ENCODE measurements at regions of chr15 and their contacts with region 1.

Region 1: GRCh38 chr15:55649054-55649423 is 60.9 kb upstream of the PYGO1 start:
- DNase-seq: no peak
- H3K4me3 Mint-ChIP-seq: no peak overlapping the region
- H3K27ac Mint-ChIP-seq: no peak overlapping the region
- H3K4me1 Mint-ChIP-seq: no peaks in the 10 kb centered on the region
- H3K27me3 Mint-ChIP-seq: no peaks in the 10 kb centered on the region
- CTCF ChIP-seq: no peak

Region 2: DNA sequence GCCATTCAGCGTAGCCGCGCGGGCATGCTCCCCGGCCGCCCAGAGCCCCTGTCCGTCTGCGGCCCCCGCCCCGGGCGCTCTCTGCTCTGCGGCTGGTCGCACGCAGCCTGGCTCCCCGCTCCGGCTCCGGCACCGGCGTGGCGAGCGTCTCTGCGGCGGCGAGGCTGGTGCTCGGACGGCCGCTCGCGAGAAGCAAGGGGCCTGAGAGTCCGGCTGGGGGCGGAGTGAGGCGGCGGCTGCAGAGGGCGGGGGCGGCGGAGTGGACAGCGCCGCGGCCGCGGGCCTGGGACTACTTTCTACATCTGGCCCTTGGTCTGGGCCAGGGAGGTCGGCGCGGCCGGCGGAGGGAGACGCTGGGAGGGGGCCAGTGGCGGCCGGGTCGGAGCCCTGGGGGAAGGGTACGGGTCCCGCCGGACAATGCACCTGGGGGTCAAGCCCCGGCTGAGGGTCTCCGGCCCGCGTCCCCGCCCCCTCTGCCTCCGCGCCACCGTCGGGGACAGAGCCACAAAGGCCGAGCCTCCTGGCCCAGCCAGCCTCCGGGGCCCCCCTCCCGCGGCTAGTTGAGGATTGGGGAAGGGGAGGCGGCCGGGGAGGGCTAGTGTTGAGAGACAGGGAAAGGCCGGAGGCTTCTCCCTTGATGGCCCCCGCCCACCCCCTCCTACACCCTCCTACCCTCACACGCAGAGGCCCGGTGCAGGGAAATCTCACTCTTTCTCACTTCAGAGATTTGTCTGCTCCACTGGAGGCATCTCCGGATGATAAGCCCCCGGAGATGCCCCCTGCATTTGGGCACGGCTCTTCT is 94.1 kb after region 1 on chr15 and contains the start of gene PRTG:
- CTCF ChIA-PET with region 1: interaction called, 4 read pairs
- intact Hi-C with region 1: loop called (anchors 2 kb)
- DNase-seq: peak; percentile 86
- H3K4me3 Mint-ChIP-seq: no peak within 1 kb of the TSS
- H3K27ac Mint-ChIP-seq: peak within 1 kb of the TSS; percentile 81
- H3K4me1 Mint-ChIP-seq: peaks cover 8% of the 10 kb centered on the region
- H3K27me3 Mint-ChIP-seq: peaks cover 2% of the 10 kb centered on the region
- CTCF ChIP-seq: no peak
- total RNA-seq, gene PRTG: 6.6 and 12.0 TPM in 2 replicates

Region 3: DNA sequence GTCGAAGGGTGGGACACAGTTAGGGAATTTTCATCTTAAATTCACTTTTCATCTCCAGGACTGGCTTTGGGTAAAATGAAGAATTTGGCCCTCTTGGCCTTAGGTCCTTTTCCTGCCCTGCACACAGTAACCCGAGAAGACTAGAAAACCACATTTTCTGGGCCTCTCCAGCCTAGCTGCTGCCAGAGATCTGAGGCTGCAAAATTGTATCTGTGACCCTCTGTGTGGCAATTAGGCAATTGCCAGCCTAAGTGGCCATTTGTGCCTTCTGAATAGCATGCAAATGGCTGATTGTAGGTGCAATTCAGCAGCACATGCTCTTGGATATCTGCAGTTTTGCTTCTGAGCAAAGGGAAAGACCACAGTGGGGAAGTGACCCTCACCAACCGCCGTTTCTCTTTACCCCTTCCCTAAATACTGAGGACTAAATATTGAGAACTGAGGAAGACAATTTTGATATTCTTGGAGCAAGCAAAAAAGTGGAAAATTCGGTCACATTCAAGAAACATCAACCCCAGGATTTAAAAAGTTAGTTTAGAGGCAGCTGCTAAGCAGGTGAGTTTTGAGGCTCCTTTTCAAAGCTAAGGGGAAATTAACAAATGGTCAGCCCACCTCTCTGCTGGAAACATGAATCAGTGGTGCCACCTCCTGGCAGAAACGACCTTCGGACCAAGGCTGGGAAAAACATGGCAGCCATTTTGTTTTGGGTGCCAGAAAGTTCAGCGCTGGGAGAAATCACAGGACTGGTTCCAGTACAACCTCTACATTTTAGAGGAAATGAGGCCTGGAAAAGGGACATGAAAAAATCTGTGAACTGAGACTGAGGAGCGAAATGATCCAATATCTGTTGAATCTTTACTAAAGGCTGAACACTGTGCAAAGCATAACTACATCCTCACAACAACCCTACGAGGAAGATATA is 150.5 kb after region 1 on chr15:
- CTCF ChIA-PET with region 1: interaction called, 20 read pairs
- intact Hi-C with region 1: loop called (anchors 1 kb)
- DNase-seq: peak; percentile 82
- H3K4me3 Mint-ChIP-seq: no peak overlapping the region
- H3K27ac Mint-ChIP-seq: peak overlapping the region; percentile 47
- H3K4me1 Mint-ChIP-seq: peaks cover 18% of the 10 kb centered on the region
- H3K27me3 Mint-ChIP-seq: no peaks in the 10 kb centered on the region
- CTCF ChIP-seq: peak; percentile 77

Region 4: DNA sequence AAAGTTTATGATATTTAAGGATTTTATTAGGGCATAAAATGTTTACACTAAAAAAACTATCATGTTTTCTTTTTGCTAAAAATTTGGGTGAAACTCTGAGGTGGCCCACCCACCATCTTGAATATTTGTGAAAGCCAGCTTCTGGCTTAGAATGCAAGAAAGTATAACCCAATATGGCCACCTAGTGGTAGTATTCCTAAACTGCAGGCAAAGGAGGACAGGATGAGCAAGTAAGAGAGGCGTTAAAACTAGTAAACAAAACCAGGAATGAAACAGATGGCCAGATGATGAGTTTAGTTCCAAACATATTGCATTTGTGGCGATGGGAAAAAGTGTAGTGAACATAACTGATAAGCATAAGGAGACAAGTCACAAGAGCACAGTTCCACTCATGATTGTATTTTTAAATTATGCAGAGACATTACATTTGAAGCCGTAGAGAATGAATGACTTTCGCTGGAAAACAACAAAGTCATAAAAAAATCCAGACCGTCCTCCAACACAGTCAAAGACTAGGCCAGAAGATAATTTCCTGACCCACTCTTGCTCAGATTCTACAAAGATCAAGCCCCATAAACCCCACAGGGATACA is 197.2 kb after region 1 on chr15:
- CTCF ChIA-PET with region 1: interaction called, 5 read pairs
- intact Hi-C with region 1: loop called (anchors 1 kb)
- DNase-seq: peak; percentile 77
- H3K4me3 Mint-ChIP-seq: no peak overlapping the region
- H3K27ac Mint-ChIP-seq: no peak overlapping the region
- H3K4me1 Mint-ChIP-seq: no peaks in the 10 kb centered on the region
- H3K27me3 Mint-ChIP-seq: no peaks in the 10 kb centered on the region
- CTCF ChIP-seq: peak; percentile 82

Measured in Calu3 (cell line).